H1 (cell line): ENCODE measurements at regions of chr10 and their contacts with region 1.

Region 1: GRCh38 chr10:131141645-131142505 is 169.6 kb downstream of the TCERG1L start:
- DNase-seq: no peak
- H3K4me3 ChIP-seq: no peak overlapping the region
- H3K27ac ChIP-seq: no peak overlapping the region
- H3K4me1 ChIP-seq: peaks cover 0 to 3% (median 1%) of the 10 kb centered on the region in 4 experiments; a peak in 5 of 7 replicates
- H3K27me3 ChIP-seq: no peaks in the 10 kb centered on the region
- CTCF ChIP-seq: peak; percentile 21 to 40 (median 23)
- EP300 ChIP-seq: no peak
- POLR2A ChIP-seq: no peak
- RAD21 ChIP-seq: peak; percentile 26 to 35; a peak in 3 of 4 replicates

Region 2: GRCh38 chr10:131126351-131127123 is 15.3 kb before region 1 on chr10:
- CTCF ChIA-PET with region 1: interaction called, 15 read pairs
- POLR2A ChIA-PET with region 1: no interaction called
- DNase-seq: no peak
- H3K4me3 ChIP-seq: no peak overlapping the region
- H3K27ac ChIP-seq: 0 out of 2 replicates have a peak overlapping the region, but pooled peaks have one; percentile 12
- H3K4me1 ChIP-seq: peaks cover 0 to 16% (median 12%) of the 10 kb centered on the region in 4 experiments; a peak in 4 of 7 replicates
- H3K27me3 ChIP-seq: no peaks in the 10 kb centered on the region
- CTCF ChIP-seq: no peak
- EP300 ChIP-seq: no peak
- POLR2A ChIP-seq: no peak
- RAD21 ChIP-seq: no peak; a peak in 1 of 4 replicates

Region 3: DNA sequence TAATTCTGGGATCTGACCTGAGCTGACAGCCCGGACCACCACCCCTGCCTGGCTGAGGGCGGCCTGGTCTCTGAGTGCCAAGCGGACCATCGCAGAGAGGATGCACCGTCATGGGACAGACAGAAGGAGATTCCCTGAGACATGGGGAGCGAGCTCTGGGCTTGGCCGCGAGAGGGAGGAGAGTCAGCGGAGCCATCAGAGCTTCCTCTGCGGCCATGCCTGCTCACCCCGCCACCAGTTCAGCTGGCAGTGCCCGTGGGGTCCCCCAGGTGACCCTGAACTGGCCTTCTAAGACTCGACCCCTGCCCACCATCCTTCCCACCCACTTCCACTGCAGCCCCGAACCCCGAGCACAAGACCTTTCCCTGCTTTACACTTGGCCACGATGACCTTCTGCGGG is 16.8 kb after region 1 on chr10:
- CTCF ChIA-PET with region 1: interaction called, 13 read pairs
- POLR2A ChIA-PET with region 1: no interaction called
- DNase-seq: no peak
- H3K4me3 ChIP-seq: no peak overlapping the region
- H3K27ac ChIP-seq: no peak overlapping the region
- H3K4me1 ChIP-seq: no peaks in the 10 kb centered on the region
- H3K27me3 ChIP-seq: no peaks in the 10 kb centered on the region
- CTCF ChIP-seq: no peak
- EP300 ChIP-seq: no peak
- POLR2A ChIP-seq: no peak
- RAD21 ChIP-seq: no peak